ENCODE measurements at regions of chr16 and their contacts with region 1.

Region 1: DNA sequence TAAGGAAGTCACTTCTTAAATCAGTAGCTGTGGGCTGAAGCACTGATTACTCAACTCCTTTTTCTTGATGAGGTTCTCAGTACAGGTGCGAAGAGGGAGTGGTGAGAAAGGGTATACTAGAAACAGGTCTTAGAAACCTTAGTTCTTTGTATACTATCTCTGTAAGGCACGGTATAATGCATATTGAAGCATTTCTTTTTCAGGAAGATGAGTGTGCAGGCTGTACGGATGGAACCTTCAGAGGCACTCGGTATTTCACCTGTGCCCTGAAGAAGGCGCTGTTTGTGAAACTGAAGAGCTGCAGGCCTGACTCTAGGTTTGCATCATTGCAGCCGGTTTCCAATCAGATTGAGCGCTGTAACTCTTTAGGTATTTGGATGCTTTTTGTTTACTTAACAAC is 39.2 kb downstream of the CYLD start:
- DNase-seq: peak; percentile 48
- H3K4me3 Mint-ChIP-seq: peak overlapping the region; percentile 18
- H3K27ac Mint-ChIP-seq: peak overlapping the region; percentile 70
- H3K4me1 Mint-ChIP-seq: peaks cover 51% of the 10 kb centered on the region
- H3K27me3 Mint-ChIP-seq: no peaks in the 10 kb centered on the region

Region 2: GRCh38 chr16:49821614-49822282 is 959.3 kb before region 1 on chr16:
- CTCF ChIA-PET with region 1: no interaction called
- intact Hi-C with region 1: no loop called
- DNase-seq: no peak
- H3K4me3 Mint-ChIP-seq: no peak overlapping the region
- H3K27ac Mint-ChIP-seq: no peak overlapping the region
- H3K4me1 Mint-ChIP-seq: no peaks in the 10 kb centered on the region
- H3K27me3 Mint-ChIP-seq: no peaks in the 10 kb centered on the region

Region 3: GRCh38 chr16:50585331-50585776 is 195.7 kb before region 1 on chr16:
- CTCF ChIA-PET with region 1: no interaction called
- intact Hi-C with region 1: loop called (anchors 5 kb)
- DNase-seq: no peak
- H3K4me3 Mint-ChIP-seq: no peak overlapping the region
- H3K27ac Mint-ChIP-seq: no peak overlapping the region
- H3K4me1 Mint-ChIP-seq: peaks cover 34% of the 10 kb centered on the region
- H3K27me3 Mint-ChIP-seq: no peaks in the 10 kb centered on the region

Region 4: DNA sequence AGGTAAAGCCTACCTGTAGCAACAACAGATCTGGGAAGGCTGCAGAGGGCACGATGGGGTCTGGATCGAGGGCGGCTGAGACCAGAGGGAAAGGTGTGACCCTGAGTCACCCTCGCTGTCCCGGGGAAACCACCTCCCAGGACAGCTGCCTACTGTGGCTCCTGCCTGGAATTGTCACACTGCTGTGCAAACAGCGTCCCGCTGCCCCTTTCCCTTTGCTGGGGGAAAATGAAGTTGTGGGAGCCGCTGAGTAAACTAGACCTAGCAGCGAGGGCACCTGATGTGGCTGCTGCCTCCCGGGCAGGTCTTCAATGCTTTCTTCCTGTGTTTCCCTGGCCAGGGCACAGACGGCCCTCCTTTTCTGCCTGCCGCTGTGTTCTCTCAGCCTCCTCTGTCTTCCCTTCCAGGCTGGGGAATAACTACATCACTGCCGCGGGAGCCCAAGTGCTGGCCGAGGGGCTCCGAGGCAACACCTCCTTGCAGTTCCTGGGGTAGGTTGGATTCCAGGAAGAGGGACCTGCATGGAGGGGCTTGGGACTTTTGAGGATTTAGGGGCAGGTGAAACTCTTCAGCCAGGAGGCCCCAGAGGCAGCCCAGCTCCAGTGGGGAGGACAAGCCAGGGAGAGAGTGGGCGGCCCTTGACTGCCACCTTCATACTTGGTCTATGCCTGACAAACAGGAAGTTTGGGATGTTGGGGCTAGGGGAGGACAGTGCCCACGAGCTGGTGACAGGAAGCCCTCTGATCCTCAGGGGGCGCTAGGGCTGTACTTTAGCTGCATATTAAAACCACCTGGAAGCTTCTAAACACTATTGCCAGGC is 61.3 kb before region 1 on chr16:
- CTCF ChIA-PET with region 1: no interaction called
- intact Hi-C with region 1: no loop called
- DNase-seq: peak; percentile 50
- H3K4me3 Mint-ChIP-seq: no peak overlapping the region
- H3K27ac Mint-ChIP-seq: no peak overlapping the region
- H3K4me1 Mint-ChIP-seq: peaks cover 35% of the 10 kb centered on the region
- H3K27me3 Mint-ChIP-seq: no peaks in the 10 kb centered on the region

Region 5: GRCh38 chr16:50765260-50765659 is 15.8 kb before region 1 on chr16:
- CTCF ChIA-PET with region 1: interaction called, 17 read pairs
- intact Hi-C with region 1: loop called (anchors 1 kb)
- DNase-seq: peak; percentile 23
- H3K4me3 Mint-ChIP-seq: peak overlapping the region; percentile 14
- H3K27ac Mint-ChIP-seq: peak overlapping the region; percentile 79
- H3K4me1 Mint-ChIP-seq: peaks cover 89% of the 10 kb centered on the region
- H3K27me3 Mint-ChIP-seq: no peaks in the 10 kb centered on the region

Region 6: DNA sequence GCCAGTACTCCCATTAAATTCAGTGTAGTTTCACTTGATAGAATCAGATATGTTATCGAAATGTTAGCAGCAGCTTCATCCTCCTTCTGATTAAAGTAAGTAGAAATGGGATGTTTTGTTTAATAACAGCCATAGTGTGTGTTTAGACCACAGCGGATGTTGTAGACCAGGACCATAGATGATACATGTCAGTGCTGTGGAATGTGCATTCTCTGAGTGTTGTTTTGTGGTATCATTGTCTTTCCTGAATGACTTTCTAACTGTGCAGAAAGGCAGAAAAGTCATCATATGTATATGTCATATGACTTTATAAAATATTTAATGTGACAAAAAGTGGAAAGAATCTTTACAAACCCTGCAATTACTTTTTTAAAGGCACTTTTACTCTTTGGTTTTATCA is 16.4 kb after region 1 on chr16:
- CTCF ChIA-PET with region 1: no interaction called
- intact Hi-C with region 1: no loop called
- DNase-seq: no peak
- H3K4me3 Mint-ChIP-seq: no peak overlapping the region
- H3K27ac Mint-ChIP-seq: no peak overlapping the region
- H3K4me1 Mint-ChIP-seq: peaks cover 10% of the 10 kb centered on the region
- H3K27me3 Mint-ChIP-seq: no peaks in the 10 kb centered on the region

Measured in activated naive CD4-positive, alpha-beta T cell treated with anti-CD3 and anti-CD28 coated beads for 36 hours (primary cell).